Activated B cell treated with CpG ODN at 0.5 μM for 24 hours (primary cell): ENCODE measurements at regions of chrX and their contacts with region 1.

Region 1: DNA sequence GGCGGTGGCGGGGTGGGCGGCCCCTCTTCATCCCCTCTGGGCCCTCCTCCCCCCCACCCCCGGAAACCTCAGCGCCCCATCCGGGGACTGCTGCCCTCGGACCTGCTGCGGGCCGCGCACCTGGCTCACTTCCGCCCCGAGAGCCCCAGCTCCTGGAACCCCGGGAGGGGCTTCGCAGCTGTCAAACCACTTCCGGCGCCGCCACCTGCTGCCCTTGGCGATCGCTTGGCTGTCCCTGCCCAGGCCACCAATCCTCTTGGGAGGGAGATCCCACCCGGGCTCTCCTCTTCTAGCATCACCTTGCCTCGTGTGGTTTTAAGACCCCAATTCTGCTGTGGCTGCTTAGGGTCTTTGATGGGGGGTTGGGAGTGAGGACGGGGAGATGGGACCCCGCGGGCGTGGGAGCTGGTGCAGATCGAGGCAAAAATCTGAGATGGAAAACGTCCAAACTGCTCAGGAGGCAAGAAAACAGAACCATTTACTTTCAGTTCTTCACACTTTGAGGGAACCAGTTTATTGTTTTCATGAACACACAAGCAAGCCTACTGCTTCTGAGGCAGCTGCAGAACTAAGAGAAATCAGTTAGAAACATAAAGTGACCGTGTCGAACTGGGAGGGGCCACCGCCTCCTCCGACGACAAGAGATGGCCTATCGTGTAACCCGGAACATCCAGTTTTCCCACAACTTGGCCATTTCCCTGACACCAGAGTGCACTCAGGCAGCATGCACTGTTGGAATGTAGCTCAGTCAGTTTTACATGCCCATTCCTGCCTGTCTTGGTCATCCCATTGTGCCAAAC is 779 bp downstream of the MTMR1 start:
- DNase-seq: peak; percentile 65
- ATAC-seq: peak; percentile 56
- H3K4me3 Mint-ChIP-seq: peak overlapping the region; percentile 88
- H3K27ac Mint-ChIP-seq: peak overlapping the region; percentile 98
- H3K4me1 Mint-ChIP-seq: peaks cover 61% of the 10 kb centered on the region
- H3K27me3 Mint-ChIP-seq: no peaks in the 10 kb centered on the region
- CTCF ChIP-seq: no peak

Region 2: GRCh38 chrX:149631234-149632165 is 1062.5 kb before region 1 on chrX and contains the start of gene TMEM185A:
- CTCF ChIA-PET with region 1: no interaction called
- POLR2A ChIA-PET with region 1: interaction called, 4 read pairs
- intact Hi-C with region 1: loop called (anchors 10 kb)
- DNase-seq: peak; percentile 64
- ATAC-seq: peak; percentile 95
- H3K4me3 Mint-ChIP-seq: peak within 1 kb of the TSS; percentile 89
- H3K27ac Mint-ChIP-seq: peak within 1 kb of the TSS; percentile 68
- H3K4me1 Mint-ChIP-seq: peaks cover 26% of the 10 kb centered on the region
- H3K27me3 Mint-ChIP-seq: peaks cover under 1% of the 10 kb centered on the region
- CTCF ChIP-seq: no peak
- total RNA-seq, gene TMEM185A: 17.4 and 19.1 TPM in 2 replicates

Region 3: DNA sequence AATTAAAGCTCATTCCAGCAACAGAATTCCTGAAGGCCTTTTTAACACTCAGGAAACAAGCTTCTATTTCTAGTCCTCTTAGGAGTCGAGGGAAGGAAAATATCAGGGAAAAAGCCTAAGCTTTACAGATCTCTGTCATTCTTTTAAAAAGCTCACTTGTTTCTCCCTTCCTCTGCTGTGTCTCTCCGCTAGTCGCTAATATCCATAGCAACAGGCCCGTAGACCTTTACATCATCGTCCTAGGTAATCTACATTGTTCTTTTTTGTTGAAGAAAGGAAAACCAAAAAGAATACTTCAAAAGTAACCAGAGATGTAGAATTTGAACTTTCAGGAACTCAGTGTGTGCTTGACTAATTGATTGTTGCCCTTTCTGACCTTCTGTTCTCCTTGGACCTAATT is 46.6 kb before region 1 on chrX:
- CTCF ChIA-PET with region 1: no interaction called
- POLR2A ChIA-PET with region 1: interaction called, 10 read pairs
- intact Hi-C with region 1: no loop called
- DNase-seq: no peak
- ATAC-seq: no peak
- H3K4me3 Mint-ChIP-seq: no peak overlapping the region
- H3K27ac Mint-ChIP-seq: no peak overlapping the region
- H3K4me1 Mint-ChIP-seq: no peaks in the 10 kb centered on the region
- H3K27me3 Mint-ChIP-seq: no peaks in the 10 kb centered on the region
- CTCF ChIP-seq: no peak

Region 4: GRCh38 chrX:150704030-150704613 is 10.1 kb after region 1 on chrX:
- CTCF ChIA-PET with region 1: no interaction called
- POLR2A ChIA-PET with region 1: interaction called, 30 read pairs
- intact Hi-C with region 1: no loop called
- DNase-seq: no peak
- ATAC-seq: no peak
- H3K4me3 Mint-ChIP-seq: no peak overlapping the region
- H3K27ac Mint-ChIP-seq: peak overlapping the region; percentile 35
- H3K4me1 Mint-ChIP-seq: peaks cover 36% of the 10 kb centered on the region
- H3K27me3 Mint-ChIP-seq: no peaks in the 10 kb centered on the region
- CTCF ChIP-seq: no peak

Region 5: GRCh38 chrX:150898343-150899190 is 204.6 kb after region 1 on chrX and contains the start of gene CD99L2:
- CTCF ChIA-PET with region 1: no interaction called
- POLR2A ChIA-PET with region 1: no interaction called
- intact Hi-C with region 1: loop called (anchors 5 kb)
- DNase-seq: peak; percentile 84
- ATAC-seq: peak; percentile 91
- H3K4me3 Mint-ChIP-seq: peak within 1 kb of the TSS; percentile 90
- H3K27ac Mint-ChIP-seq: peak within 1 kb of the TSS; percentile 69
- H3K4me1 Mint-ChIP-seq: peaks cover 2% of the 10 kb centered on the region
- H3K27me3 Mint-ChIP-seq: peaks cover 6% of the 10 kb centered on the region
- CTCF ChIP-seq: no peak
- total RNA-seq, gene CD99L2: 12.5 and 12.7 TPM in 2 replicates

Region 6: DNA sequence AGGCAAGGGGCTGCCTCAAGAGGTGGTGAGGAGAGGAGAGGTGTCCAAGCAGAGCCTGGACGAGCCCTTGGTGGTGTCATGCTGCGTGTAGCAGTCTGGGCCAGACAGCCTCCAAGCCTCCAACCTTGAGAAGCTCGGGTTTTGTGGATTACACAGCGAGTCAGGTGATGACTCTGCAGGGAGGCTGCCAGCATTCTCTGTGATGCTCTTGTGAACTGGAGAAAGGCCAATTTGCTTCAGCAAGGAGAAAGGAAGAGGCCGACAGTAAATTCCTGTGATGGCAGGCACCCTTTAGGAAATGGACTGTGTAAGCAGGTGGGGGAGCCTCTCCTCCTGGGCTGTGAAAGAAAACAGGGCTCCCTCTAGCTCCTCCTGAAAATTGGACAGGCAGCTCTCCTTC is 240.5 kb after region 1 on chrX:
- CTCF ChIA-PET with region 1: no interaction called
- POLR2A ChIA-PET with region 1: no interaction called
- intact Hi-C with region 1: no loop called
- DNase-seq: no peak
- ATAC-seq: no peak
- H3K4me3 Mint-ChIP-seq: no peak overlapping the region
- H3K27ac Mint-ChIP-seq: no peak overlapping the region
- H3K4me1 Mint-ChIP-seq: no peaks in the 10 kb centered on the region
- H3K27me3 Mint-ChIP-seq: peaks cover 3% of the 10 kb centered on the region
- CTCF ChIP-seq: no peak